CD8-positive, alpha-beta memory T cell (primary cell): ENCODE measurements at regions of chr6 and their contacts with region 1.

Region 1: DNA sequence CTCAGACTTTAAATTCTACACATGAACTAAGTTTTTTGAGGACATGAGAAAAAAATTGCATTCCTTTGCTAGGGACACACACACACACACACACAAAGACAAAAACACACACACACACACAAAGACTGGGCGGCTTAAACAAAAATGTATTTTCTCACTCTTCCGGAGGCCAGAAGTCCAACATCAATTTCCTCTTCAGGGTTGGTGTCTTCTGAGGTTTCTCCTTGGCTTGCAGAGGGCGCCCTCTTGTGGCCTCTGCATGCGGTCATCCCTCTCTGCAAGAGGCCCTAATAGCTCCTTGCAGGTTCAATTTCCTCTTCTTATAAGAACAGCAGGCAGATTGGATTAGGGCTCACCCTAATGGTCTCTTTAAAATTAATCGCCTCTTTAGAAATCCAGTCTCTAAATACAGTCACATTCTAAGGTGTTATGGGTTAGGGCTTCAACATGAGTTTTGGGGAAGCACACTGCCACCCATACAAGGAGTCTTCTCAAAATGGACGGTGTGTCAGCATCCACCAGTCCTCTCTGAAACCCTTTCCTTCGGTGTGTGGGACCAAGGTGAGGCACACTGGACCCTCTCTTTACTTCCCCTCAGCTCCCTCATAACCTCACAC is 61.4 kb downstream of the GPR6 start:
- DNase-seq: peak; percentile 69 to 84 (median 74)
- H3K4me3 ChIP-seq: peak overlapping the region; percentile 71
- H3K4me3 Mint-ChIP-seq: peak overlapping the region; percentile 77 to 94 (median 91)
- H3K27ac ChIP-seq: peak overlapping the region; percentile 14
- H3K27ac Mint-ChIP-seq: peak overlapping the region; percentile 39 to 97 (median 89)
- H3K4me1 ChIP-seq: peaks cover 6% of the 10 kb centered on the region
- H3K4me1 Mint-ChIP-seq: peaks cover 12 to 16% (median 14%) of the 10 kb centered on the region in 3 donors
- H3K27me3 ChIP-seq: no peaks in the 10 kb centered on the region
- H3K27me3 Mint-ChIP-seq: no peaks in the 10 kb centered on the region

Region 2: GRCh38 chr6:109526905-109527628 is 512.4 kb before region 1 on chr6:
- CTCF ChIA-PET with region 1: interaction called, 29 read pairs
- POLR2A ChIA-PET with region 1: no interaction called
- DNase-seq: peak; percentile 5 to 53 (median 28)
- H3K4me3 ChIP-seq: no peak overlapping the region
- H3K4me3 Mint-ChIP-seq: no peak overlapping the region
- H3K27ac ChIP-seq: no peak overlapping the region
- H3K27ac Mint-ChIP-seq: no peak overlapping the region
- H3K4me1 ChIP-seq: no peaks in the 10 kb centered on the region
- H3K4me1 Mint-ChIP-seq: peaks cover 0 to 4% (median 0%) of the 10 kb centered on the region in 3 donors
- H3K27me3 ChIP-seq: no peaks in the 10 kb centered on the region
- H3K27me3 Mint-ChIP-seq: peaks cover 0 to 2% of the 10 kb centered on the region in 2 donors

Region 3: DNA sequence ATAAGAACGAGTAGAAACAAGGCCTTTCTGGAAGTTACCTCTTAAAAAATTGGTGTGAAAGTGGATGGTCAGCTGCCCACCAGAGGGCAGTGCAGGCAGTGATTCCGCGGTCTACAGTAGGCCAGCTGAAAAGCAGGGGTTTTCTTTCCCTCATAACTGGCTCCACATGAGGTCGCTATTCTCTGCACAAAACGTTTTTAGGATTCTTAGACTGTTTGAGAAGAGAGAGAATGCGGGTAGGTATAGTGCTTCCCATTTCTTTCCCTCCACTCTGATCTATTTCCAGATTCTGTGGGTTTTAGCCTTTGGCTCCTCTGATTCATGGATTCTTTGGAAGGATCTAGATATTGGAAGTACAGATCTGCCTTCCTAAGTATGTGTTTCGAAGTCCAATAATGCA is 334.2 kb before region 1 on chr6:
- CTCF ChIA-PET with region 1: interaction called, 76 read pairs
- POLR2A ChIA-PET with region 1: no interaction called
- DNase-seq: peak; percentile 38 to 79 (median 66)
- H3K4me3 ChIP-seq: no peak overlapping the region
- H3K4me3 Mint-ChIP-seq: no peak overlapping the region
- H3K27ac ChIP-seq: no peak overlapping the region
- H3K27ac Mint-ChIP-seq: peak overlapping the region in 2 of 8 donors; percentile 12 to 37
- H3K4me1 ChIP-seq: no peaks in the 10 kb centered on the region
- H3K4me1 Mint-ChIP-seq: peaks cover 24 to 32% (median 24%) of the 10 kb centered on the region in 3 donors
- H3K27me3 ChIP-seq: no peaks in the 10 kb centered on the region
- H3K27me3 Mint-ChIP-seq: no peaks in the 10 kb centered on the region

Region 4: GRCh38 chr6:110029144-110029543 is 10.3 kb before region 1 on chr6:
- CTCF ChIA-PET with region 1: interaction called, 27 read pairs
- POLR2A ChIA-PET with region 1: no interaction called
- DNase-seq: no peak
- H3K4me3 ChIP-seq: no peak overlapping the region
- H3K4me3 Mint-ChIP-seq: no peak overlapping the region
- H3K27ac ChIP-seq: no peak overlapping the region
- H3K27ac Mint-ChIP-seq: no peak overlapping the region
- H3K4me1 ChIP-seq: no peaks in the 10 kb centered on the region
- H3K4me1 Mint-ChIP-seq: no peaks in the 10 kb centered on the region
- H3K27me3 ChIP-seq: no peaks in the 10 kb centered on the region
- H3K27me3 Mint-ChIP-seq: peaks cover 3 to 7% of the 10 kb centered on the region in 2 donors

Region 5: GRCh38 chr6:110389689-110390382 is 350.4 kb after region 1 on chr6:
- CTCF ChIA-PET with region 1: interaction called, 44 read pairs
- POLR2A ChIA-PET with region 1: no interaction called
- DNase-seq: no peak
- H3K4me3 ChIP-seq: no peak overlapping the region
- H3K4me3 Mint-ChIP-seq: peak overlapping the region in 2 of 7 donors; percentile 49 to 50
- H3K27ac ChIP-seq: no peak overlapping the region
- H3K27ac Mint-ChIP-seq: peak overlapping the region in 7 of 8 donors; percentile 21 to 82 (median 54)
- H3K4me1 ChIP-seq: peaks cover 11% of the 10 kb centered on the region
- H3K4me1 Mint-ChIP-seq: peaks cover 16 to 23% (median 18%) of the 10 kb centered on the region in 3 donors
- H3K27me3 ChIP-seq: no peaks in the 10 kb centered on the region
- H3K27me3 Mint-ChIP-seq: peaks cover 0 to 1% of the 10 kb centered on the region in 2 donors